ENCODE measurements at regions of chr15 and their contacts with region 1.

Region 1: GRCh38 chr15:82999905-83000671 is 11.4 kb downstream of the C15orf40 start:
- DNase-seq: no peak
- ATAC-seq: peak; percentile 96
- H3K4me3 ChIP-seq: peak overlapping the region in 2 of 4 donors; percentile 11 to 19
- H3K27ac ChIP-seq: peak overlapping the region; percentile 38 to 68 (median 52)
- H3K4me1 ChIP-seq: peaks cover 0 to 7% of the 10 kb centered on the region in 2 donors
- H3K27me3 ChIP-seq: no peaks in the 10 kb centered on the region
- CTCF ChIP-seq: peak; percentile 37 to 68 (median 53)
- POLR2A ChIP-seq: no peak

Region 2: GRCh38 chr15:82530606-82531379 is 469.3 kb before region 1 on chr15:
- in situ Hi-C with region 1: loop called in 3 of 4 experiments (anchors 10 to 25 kb)
- intact Hi-C with region 1: no loop called
- DNase-seq: peak in 1 of 2 donors; percentile 49
- ATAC-seq: peak; percentile 56 to 89
- H3K4me3 ChIP-seq: peak overlapping the region in 3 of 4 donors; percentile 24 to 28 (median 24)
- H3K27ac ChIP-seq: no peak overlapping the region
- H3K4me1 ChIP-seq: no peaks in the 10 kb centered on the region
- H3K27me3 ChIP-seq: no peaks in the 10 kb centered on the region
- CTCF ChIP-seq: peak; percentile 30 to 84 (median 72)
- POLR2A ChIP-seq: no peak

Region 3: GRCh38 chr15:82597815-82598214 is 402.3 kb before region 1 on chr15:
- in situ Hi-C with region 1: no loop called
- intact Hi-C with region 1: no loop called
- DNase-seq: no peak
- ATAC-seq: no peak
- H3K4me3 ChIP-seq: no peak overlapping the region
- H3K27ac ChIP-seq: no peak overlapping the region
- H3K4me1 ChIP-seq: no peaks in the 10 kb centered on the region
- H3K27me3 ChIP-seq: peaks cover 0 to 2% (median 0%) of the 10 kb centered on the region in 3 donors
- CTCF ChIP-seq: no peak
- POLR2A ChIP-seq: no peak